Natural killer cell (primary cell): ENCODE measurements at regions of chr9 and their contacts with region 1.

Region 1: DNA sequence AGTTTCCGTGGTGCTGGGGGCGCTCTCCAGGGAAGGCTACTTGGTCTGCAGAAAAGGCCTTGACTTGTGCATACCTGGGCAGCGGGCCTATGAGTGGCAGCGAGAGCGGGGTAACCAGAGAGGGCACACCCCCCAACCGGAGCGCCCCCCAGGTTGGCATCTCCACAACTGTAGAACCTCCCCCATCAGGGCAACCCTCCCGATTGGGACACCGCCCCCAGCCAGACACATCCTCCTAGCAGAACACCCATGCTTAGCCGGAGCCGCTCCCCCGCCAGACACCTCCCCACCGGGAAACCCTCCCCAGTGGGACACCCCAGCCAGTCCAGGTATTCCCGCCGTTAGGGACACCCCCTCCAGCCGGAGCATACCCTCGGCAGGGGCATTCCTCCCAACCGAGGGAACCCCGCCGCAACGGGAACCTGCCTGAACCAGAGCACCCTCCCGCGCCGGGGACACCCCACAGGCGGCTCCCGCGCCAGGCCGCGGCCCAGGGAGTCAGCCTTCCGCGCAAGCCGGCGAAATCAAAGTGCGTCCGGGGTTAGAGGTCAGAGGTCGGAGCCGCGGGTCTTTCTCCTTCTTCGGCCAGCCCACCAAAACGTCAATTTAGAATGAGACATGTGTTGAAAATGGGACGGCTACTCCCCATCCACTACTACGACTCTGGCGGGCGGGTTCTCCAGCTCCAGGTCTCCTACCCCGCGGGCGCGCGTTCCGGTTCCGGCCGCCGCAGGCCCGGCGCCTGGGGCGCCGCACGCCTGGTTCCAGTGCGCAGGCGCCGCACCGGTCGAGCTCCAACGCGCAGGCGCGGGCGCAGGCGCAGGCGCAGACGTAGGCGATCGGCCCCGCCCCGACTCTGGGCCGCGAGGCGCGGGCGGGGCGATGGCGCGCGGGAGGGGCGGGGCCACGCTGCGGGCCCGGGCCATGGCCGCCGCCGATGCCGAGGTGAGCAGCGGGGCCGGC is at the start of gene EHMT1:
- DNase-seq: peak; percentile 96 to 97
- ATAC-seq: peak; percentile 85 to 94 (median 88)
- H3K4me3 ChIP-seq: peak within 1 kb of the TSS; percentile 95
- H3K4me3 Mint-ChIP-seq: peak within 1 kb of the TSS; percentile 88
- H3K27ac ChIP-seq: peak within 1 kb of the TSS; percentile 85
- H3K27ac Mint-ChIP-seq: peak within 1 kb of the TSS; percentile 87 to 94
- H3K4me1 ChIP-seq: peaks cover 31% of the 10 kb centered on the region
- H3K4me1 Mint-ChIP-seq: peaks cover 31 to 36% of the 10 kb centered on the region in 2 donors
- H3K27me3 ChIP-seq: no peaks in the 10 kb centered on the region
- H3K27me3 Mint-ChIP-seq: no peaks in the 10 kb centered on the region
- CTCF ChIP-seq: no peak
- total RNA-seq, gene EHMT1: 173 to 200 (median 176) TPM

Region 2: GRCh38 chr9:137478962-137479861 is 139.2 kb before region 1 on chr9:
- intact Hi-C with region 1: no loop called
- DNase-seq: no peak
- ATAC-seq: no peak
- H3K4me3 ChIP-seq: no peak overlapping the region
- H3K4me3 Mint-ChIP-seq: no peak overlapping the region
- H3K27ac ChIP-seq: no peak overlapping the region
- H3K27ac Mint-ChIP-seq: no peak overlapping the region
- H3K4me1 ChIP-seq: no peaks in the 10 kb centered on the region
- H3K4me1 Mint-ChIP-seq: no peaks in the 10 kb centered on the region
- H3K27me3 ChIP-seq: no peaks in the 10 kb centered on the region
- H3K27me3 Mint-ChIP-seq: no peaks in the 10 kb centered on the region
- CTCF ChIP-seq: no peak

Region 3: DNA sequence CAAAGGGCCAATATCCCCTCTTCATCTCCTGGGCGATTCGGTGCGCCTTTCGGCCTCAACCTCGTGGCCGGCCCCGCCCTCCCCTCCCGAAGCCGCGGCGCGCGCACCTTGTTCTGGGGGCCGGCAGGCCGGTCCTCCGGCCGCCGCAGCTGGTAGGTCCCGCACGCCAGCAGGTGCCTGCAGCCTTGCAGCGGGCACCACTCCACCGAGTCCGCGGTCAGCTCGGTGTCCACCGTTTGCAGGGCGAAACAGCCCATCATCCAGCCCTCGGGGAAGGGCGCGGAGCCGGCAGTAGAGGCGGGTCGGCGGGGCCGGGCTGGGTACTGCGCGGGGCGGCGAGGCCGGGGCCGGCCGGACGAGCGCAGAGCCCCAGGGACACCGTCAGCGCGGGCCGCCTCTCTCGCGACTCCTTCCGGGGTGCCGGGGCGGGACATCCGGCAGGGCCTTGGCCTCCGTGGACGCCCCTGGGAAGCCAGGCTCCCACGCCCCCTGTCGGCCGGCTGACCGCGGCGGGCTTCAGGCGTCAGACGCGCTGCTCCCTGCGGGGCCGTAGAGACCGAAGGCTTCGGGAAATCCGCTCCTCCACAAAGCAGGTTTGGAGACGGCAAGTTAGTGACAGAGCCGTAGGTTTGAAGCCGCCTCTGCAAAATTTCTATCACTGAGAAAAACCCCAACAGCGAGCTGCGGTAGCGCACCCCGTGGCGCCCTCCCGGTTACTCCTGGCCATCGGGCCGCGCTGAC is 39.7 kb before region 1 on chr9 and contains the start of gene DPH7:
- intact Hi-C with region 1: loop called (anchors 2 kb)
- DNase-seq: peak; percentile 96 to 97
- ATAC-seq: peak; percentile 99
- H3K4me3 ChIP-seq: peak within 1 kb of the TSS; percentile 52
- H3K4me3 Mint-ChIP-seq: peak within 1 kb of the TSS; percentile 81
- H3K27ac ChIP-seq: no peak within 1 kb of the TSS
- H3K27ac Mint-ChIP-seq: peak within 1 kb of the TSS; percentile 60 to 63
- H3K4me1 ChIP-seq: peaks cover 23% of the 10 kb centered on the region
- H3K4me1 Mint-ChIP-seq: peaks cover 25 to 28% of the 10 kb centered on the region in 2 donors
- H3K27me3 ChIP-seq: no peaks in the 10 kb centered on the region
- H3K27me3 Mint-ChIP-seq: no peaks in the 10 kb centered on the region
- CTCF ChIP-seq: peak; percentile 92
- total RNA-seq, gene DPH7: 39.5 to 51.0 (median 48.5) TPM

Region 4: GRCh38 chr9:137672907-137673791 is 54.8 kb after region 1 on chr9:
- intact Hi-C with region 1: no loop called
- DNase-seq: peak in 1 of 2 donors; percentile 78
- ATAC-seq: peak; percentile 85 to 97 (median 85)
- H3K4me3 ChIP-seq: no peak overlapping the region
- H3K4me3 Mint-ChIP-seq: no peak overlapping the region
- H3K27ac ChIP-seq: no peak overlapping the region
- H3K27ac Mint-ChIP-seq: peak overlapping the region; percentile 21 to 39
- H3K4me1 ChIP-seq: peaks cover 16% of the 10 kb centered on the region
- H3K4me1 Mint-ChIP-seq: peaks cover 47 to 61% of the 10 kb centered on the region in 2 donors
- H3K27me3 ChIP-seq: no peaks in the 10 kb centered on the region
- H3K27me3 Mint-ChIP-seq: no peaks in the 10 kb centered on the region
- CTCF ChIP-seq: peak; percentile 94